ENCODE measurements at regions of chr3 and their contacts with region 1.

Region 1: DNA sequence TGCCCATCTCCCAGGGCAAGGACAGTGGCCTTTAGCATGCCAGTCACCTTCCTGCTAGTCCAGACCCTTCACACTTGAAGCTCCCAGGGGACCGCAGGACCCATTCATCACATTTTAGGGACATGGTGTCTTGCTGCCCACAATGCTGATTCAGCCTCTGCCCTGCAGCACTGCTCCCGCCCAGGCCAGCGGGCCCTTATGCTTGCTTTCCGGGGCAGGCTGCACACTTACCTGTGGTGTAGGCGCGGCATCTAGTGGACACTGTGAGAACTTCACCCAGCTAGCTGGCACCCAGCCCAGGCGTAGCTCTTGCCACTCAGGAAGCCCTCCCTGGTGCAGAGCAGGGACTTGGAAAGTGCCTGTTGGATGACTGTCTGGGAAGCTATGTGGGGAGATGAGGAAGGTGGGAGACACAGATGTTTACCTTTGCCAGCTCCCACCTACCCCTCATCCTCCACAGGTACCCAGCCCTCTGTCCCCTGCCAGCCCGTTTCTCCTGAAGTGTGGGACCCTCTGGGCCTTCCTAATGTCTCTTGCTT is 26.2 kb upstream of the NR2C2 start:
- DNase-seq: peak; percentile 95
- ATAC-seq: peak; percentile 84
- H3K4me3 ChIP-seq: no peak overlapping the region; the same call in 1 of the 2 replicates
- H3K27ac ChIP-seq: no peak overlapping the region
- H3K4me1 ChIP-seq: peaks cover 15% of the 10 kb centered on the region
- H3K27me3 ChIP-seq: peaks cover 20% of the 10 kb centered on the region
- CTCF ChIP-seq: peak; percentile 93

Region 2: DNA sequence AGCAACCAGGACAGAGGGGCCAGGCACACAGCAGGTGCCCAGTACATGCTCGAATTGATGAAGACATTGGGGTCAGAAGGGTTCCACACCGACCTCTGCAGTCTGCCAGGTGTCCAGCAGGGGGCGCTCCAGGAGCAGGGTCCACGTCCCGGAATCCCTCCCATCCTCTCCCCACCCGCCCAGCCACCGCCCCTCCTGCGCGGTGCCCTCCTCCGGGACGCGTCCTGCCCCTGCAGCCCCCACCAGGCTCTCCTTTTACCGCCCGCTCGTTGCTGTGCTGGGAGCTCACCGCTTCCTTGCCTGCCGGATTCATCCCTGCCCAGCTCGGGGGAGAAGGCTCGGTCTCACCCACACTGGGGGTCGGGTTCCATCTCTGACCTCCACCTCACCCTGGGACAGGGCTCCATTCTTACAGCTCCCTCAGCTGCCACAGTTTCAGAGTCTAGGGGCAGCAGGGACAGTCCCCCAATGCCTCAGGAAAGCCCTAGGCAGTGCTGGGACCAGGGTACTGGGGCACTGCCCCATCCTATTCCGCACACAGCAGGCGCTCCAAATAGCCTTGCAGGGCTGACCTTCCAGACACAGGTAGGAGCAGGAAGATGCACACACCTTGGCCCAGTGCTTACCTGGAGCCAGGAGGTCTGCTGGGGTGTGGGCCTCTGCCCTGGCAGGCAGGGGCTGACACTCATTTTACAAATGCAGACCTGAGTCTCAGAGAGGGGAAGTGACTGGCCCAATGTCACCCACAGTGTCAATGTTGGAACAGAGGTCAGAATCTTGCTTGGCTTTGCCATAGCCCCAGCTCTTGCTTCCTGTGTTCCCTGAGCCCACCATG is 412.0 kb before region 1 on chr3:
- CTCF ChIA-PET with region 1: no interaction called
- POLR2A ChIA-PET with region 1: no interaction called
- intact Hi-C with region 1: loop called (anchors 5 kb)
- DNase-seq: peak; percentile 80
- ATAC-seq: peak; percentile 89
- H3K4me3 ChIP-seq: peak overlapping the region; percentile 51; the same call in 1 of the 2 replicates
- H3K27ac ChIP-seq: no peak overlapping the region
- H3K4me1 ChIP-seq: no peaks in the 10 kb centered on the region
- H3K27me3 ChIP-seq: no peaks in the 10 kb centered on the region; the same call in 1 of the 2 replicates
- CTCF ChIP-seq: peak; percentile 80

Region 3: DNA sequence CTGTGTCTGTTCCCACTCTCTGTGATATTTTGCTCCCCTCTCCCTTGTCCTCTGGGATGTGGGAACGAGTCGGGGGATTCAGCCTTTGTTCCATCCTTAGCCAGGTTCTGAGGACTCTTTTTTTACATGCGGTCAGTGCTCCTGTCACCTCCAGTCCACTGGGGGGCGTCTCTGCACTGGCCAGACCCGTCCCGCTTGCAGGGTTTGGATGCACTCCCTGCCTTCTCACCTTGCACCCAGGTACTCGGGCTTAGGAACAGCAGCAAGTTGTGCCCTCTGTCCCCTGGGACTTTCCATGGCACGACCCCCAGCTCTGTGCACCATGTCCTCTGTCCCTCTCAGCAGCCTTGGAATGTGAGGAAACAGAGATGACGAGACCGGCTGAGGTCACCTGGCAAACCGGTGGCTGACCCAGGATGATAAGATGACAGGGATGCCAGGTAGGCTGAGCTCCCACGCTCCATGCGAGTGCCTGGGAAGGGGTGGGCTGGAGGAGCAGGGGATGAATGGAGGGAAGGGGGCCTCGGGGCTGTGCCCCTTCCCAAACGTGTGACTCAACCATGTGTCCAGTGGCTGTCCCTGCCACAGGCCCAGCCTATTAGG is 129.7 kb before region 1 on chr3:
- CTCF ChIA-PET with region 1: interaction called, 8 read pairs
- POLR2A ChIA-PET with region 1: no interaction called
- intact Hi-C with region 1: loop called (anchors 1 kb)
- DNase-seq: peak; percentile 68
- ATAC-seq: peak; percentile 91
- H3K4me3 ChIP-seq: peak overlapping the region; percentile 28; the same call in 1 of the 2 replicates
- H3K27ac ChIP-seq: no peak overlapping the region
- H3K4me1 ChIP-seq: no peaks in the 10 kb centered on the region
- H3K27me3 ChIP-seq: peaks cover 38% of the 10 kb centered on the region
- CTCF ChIP-seq: peak; percentile 92

Region 4: DNA sequence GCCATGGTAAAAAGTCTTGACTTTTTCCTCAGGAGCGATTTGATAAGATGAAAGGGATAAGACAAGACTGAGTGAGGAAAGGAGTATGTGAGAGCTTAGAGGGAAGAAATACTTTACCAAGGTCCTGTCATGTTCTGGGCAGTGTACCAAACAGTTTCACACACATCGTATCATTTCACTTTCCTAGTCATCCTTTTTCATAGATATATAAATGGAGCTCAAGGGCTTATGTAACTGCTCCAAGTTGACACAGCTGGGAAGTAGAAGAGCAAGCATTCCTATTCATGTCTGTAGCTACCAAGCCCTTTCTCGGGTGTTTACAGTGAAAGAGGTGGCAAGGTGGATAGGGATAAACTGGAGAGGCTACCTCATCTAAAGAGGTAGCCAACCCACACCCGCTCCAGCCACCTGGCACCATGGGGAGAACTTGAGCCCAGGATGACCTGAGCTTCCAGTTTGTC is 86.6 kb after region 1 on chr3:
- CTCF ChIA-PET with region 1: no interaction called
- POLR2A ChIA-PET with region 1: no interaction called
- intact Hi-C with region 1: no loop called
- DNase-seq: peak; percentile 16
- ATAC-seq: peak; percentile 70
- H3K4me3 ChIP-seq: no peak overlapping the region
- H3K27ac ChIP-seq: no peak overlapping the region
- H3K4me1 ChIP-seq: no peaks in the 10 kb centered on the region
- H3K27me3 ChIP-seq: no peaks in the 10 kb centered on the region
- CTCF ChIP-seq: no peak

Region 5: GRCh38 chr3:15042936-15043335 is 121.8 kb after region 1 on chr3:
- CTCF ChIA-PET with region 1: no interaction called
- POLR2A ChIA-PET with region 1: no interaction called
- intact Hi-C with region 1: loop called (anchors 5 kb)
- DNase-seq: no peak
- ATAC-seq: no peak
- H3K4me3 ChIP-seq: no peak overlapping the region
- H3K27ac ChIP-seq: no peak overlapping the region
- H3K4me1 ChIP-seq: no peaks in the 10 kb centered on the region
- H3K27me3 ChIP-seq: no peaks in the 10 kb centered on the region
- CTCF ChIP-seq: no peak

Region 6: DNA sequence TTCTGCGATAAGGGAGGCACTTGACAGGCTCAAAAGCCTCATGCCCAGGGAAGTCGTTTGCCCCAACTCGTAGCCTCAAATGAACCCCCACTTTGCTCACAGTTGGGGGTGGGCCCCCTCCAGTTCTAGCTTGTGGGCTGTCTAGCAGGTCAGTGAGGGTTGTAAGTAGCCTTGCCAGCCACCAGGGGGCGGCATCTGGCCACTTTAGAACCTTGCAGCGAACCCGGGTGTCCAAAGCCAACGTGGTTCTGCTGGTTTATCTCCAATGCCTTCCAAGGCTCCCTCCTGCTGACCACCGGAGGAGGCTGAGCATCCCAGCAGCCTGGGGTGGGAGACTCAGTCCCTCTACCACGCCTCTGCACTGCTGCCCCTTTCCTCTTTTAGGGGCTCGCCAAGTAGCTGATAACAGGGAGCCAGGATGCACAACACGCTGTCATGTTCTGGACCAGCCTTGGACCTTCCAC is 187.0 kb after region 1 on chr3:
- CTCF ChIA-PET with region 1: no interaction called
- POLR2A ChIA-PET with region 1: no interaction called
- intact Hi-C with region 1: loop called (anchors 5 kb)
- DNase-seq: peak; percentile 78
- ATAC-seq: peak; percentile 94
- H3K4me3 ChIP-seq: no peak overlapping the region
- H3K27ac ChIP-seq: no peak overlapping the region
- H3K4me1 ChIP-seq: peaks cover under 1% of the 10 kb centered on the region; the same call in 1 of the 2 replicates
- H3K27me3 ChIP-seq: no peaks in the 10 kb centered on the region
- CTCF ChIP-seq: peak; percentile 92